CD4-positive, alpha-beta memory T cell (primary cell): ENCODE measurements at regions of chr11 and their contacts with region 1.

Region 1: DNA sequence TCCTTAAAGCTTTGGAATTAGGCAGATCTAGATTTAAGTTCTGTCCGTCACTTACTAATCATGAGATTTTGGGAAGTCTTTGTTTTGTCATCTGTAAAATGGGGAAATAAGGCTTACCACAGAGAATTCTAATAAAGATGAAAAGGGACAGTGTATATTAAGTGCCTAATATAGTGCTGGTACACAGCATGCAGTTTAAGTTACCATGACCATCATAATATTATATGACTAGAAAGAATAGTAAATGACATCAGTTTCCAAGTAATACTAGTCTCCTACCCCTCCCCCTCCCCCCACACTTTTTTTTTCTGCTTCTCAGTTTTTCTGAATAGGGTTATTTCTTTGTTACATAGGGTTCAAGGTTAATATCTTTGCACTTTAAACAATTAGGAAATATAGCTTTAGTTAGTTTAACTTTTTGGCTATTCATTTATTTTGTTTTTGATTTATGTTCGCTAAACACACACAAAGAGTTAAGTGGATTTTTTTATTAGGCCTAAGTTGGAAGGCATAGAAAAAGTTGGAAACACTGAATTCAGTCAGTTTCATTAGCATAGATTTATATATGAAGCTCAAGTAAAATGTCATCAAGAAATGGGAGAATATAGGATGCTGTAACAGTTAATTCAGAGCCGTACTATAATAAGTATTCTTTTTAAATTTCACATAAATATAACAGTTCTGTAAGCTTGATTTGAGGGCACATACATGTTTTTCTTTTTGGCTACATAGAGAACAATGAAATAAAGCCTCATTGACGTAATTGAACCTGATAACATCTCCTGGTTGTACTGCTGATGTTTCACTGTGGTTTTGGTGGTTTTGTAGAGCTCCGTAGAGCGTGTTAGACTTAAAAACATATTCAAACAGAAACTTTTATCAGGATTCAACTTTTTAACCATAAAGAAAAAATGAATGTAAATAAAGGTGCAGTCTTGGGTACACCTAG is 121.2 kb downstream of the PDE3B start:
- DNase-seq: peak; percentile 81 to 93 (median 90)
- H3K4me3 ChIP-seq: no peak overlapping the region
- H3K4me3 Mint-ChIP-seq: peak overlapping the region in 7 of 8 donors; percentile 44 to 81 (median 67)
- H3K27ac ChIP-seq: peak overlapping the region; percentile 53
- H3K27ac Mint-ChIP-seq: no peak overlapping the region
- H3K4me1 ChIP-seq: peaks cover 89% of the 10 kb centered on the region
- H3K4me1 Mint-ChIP-seq: peaks cover 18 to 40% (median 25%) of the 10 kb centered on the region in 4 donors
- H3K27me3 ChIP-seq: no peaks in the 10 kb centered on the region
- H3K27me3 Mint-ChIP-seq: no peaks in the 10 kb centered on the region

Region 2: DNA sequence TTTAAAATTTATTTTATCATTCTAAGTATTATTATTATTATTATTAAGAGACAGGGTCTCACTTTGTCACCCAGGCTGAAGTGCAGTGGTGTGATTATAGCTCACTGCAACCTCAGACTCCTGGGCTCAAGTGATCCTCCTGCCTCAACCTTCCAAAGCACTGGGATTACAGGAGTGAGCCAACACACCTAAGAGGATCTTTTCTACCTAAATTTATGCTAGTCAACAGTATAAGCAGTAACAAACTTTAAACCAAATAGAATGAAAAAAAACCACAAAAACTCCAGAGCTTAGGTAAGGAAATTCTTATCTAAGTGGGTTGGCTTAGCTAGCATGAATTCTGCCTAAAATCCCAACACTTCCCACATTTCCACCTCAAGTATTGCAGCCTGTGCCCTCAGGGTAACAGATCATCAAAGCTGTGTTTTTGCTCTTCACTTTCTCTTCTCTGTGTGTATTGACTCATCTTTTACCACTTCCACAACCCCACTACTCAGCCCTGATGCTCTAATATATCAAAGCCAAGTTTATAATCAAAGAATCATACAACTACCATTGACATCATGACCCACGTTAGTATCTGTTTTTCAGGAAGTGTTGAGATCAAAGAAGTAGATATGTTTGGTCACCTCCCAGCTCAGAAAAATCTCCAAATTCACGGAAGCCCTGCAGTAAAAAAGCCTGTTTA is 896.0 kb before region 1 on chr11:
- CTCF ChIA-PET with region 1: no interaction called
- POLR2A ChIA-PET with region 1: no interaction called
- intact Hi-C with region 1: loop called (anchors 1 kb)
- DNase-seq: peak; percentile 80 to 91 (median 84)
- H3K4me3 ChIP-seq: no peak overlapping the region
- H3K4me3 Mint-ChIP-seq: peak overlapping the region in 7 of 8 donors; percentile 1 to 56 (median 43)
- H3K27ac ChIP-seq: peak overlapping the region; percentile 55
- H3K27ac Mint-ChIP-seq: peak overlapping the region; percentile 77 to 97 (median 96)
- H3K4me1 ChIP-seq: peaks cover 32% of the 10 kb centered on the region
- H3K4me1 Mint-ChIP-seq: peaks cover 30 to 49% (median 35%) of the 10 kb centered on the region in 4 donors
- H3K27me3 ChIP-seq: no peaks in the 10 kb centered on the region
- H3K27me3 Mint-ChIP-seq: no peaks in the 10 kb centered on the region

Region 3: DNA sequence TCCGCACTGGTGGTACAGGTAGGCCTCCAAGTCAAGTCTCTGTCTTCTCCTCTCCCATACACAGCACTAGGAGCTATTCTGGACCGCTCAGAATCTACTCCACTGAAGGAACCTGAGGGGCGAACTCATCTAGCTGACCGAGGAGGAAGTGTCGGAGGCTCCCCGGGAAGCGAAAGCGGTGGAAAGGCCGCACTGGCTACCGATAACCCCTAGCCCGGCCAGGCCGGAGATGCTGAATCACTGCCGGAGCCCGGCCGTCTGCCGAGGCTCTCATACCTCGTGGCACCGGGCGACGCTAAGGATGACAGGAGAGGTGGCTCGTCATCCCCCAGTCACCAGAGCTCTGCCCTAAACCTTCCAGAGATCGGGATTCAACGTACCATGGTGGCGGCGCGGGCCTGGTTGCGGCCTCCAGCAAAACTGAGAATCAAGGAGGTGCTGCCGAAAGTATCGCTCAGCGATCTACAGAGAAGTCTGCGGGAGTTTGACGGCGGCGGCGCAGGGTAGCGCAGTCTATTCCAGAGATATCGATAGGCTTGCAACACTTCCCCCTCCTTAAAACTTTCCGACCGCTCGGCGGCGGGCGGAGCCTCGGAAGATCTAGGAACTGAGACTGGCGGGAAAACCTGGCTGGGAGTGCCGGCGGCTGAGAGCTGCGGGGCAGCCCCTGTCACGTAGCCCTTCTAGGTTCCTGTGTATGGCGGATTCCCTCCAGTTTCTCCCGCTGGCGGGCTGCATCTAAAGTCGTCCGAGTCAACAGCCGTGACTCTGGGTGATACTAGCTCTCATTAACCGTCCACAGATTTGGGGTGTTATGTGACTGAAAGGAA is 244.7 kb before region 1 on chr11 and contains the start of gene PSMA1:
- CTCF ChIA-PET with region 1: interaction called, 4 read pairs
- POLR2A ChIA-PET with region 1: interaction called, 15 read pairs
- intact Hi-C with region 1: loop called (anchors 1 kb)
- DNase-seq: peak; percentile 88 to 96 (median 91)
- H3K4me3 ChIP-seq: peak within 1 kb of the TSS; percentile 63 to 95
- H3K4me3 Mint-ChIP-seq: peak within 1 kb of the TSS; percentile 93 to 99 (median 98)
- H3K27ac ChIP-seq: peak within 1 kb of the TSS; percentile 99
- H3K27ac Mint-ChIP-seq: peak within 1 kb of the TSS; percentile 95 to 98 (median 98)
- H3K4me1 ChIP-seq: peaks cover 27% of the 10 kb centered on the region
- H3K4me1 Mint-ChIP-seq: peaks cover 17 to 41% (median 29%) of the 10 kb centered on the region in 4 donors
- H3K27me3 ChIP-seq: no peaks in the 10 kb centered on the region
- H3K27me3 Mint-ChIP-seq: no peaks in the 10 kb centered on the region
- total RNA-seq, gene PSMA1: 95.8 to 105 TPM

Region 4: GRCh38 chr11:14698771-14699170 is 66.1 kb before region 1 on chr11:
- CTCF ChIA-PET with region 1: no interaction called
- POLR2A ChIA-PET with region 1: no interaction called
- intact Hi-C with region 1: loop called (anchors 2 kb)
- DNase-seq: no peak
- H3K4me3 ChIP-seq: no peak overlapping the region
- H3K4me3 Mint-ChIP-seq: peak overlapping the region in 6 of 8 donors; percentile 2 to 73 (median 46)
- H3K27ac ChIP-seq: no peak overlapping the region
- H3K27ac Mint-ChIP-seq: peak overlapping the region in 3 of 7 donors; percentile 1 to 60 (median 24)
- H3K4me1 ChIP-seq: peaks cover 49% of the 10 kb centered on the region
- H3K4me1 Mint-ChIP-seq: peaks cover 30 to 63% (median 37%) of the 10 kb centered on the region in 4 donors
- H3K27me3 ChIP-seq: no peaks in the 10 kb centered on the region
- H3K27me3 Mint-ChIP-seq: no peaks in the 10 kb centered on the region

Region 5: GRCh38 chr11:14751975-14752407 is 12.9 kb before region 1 on chr11:
- CTCF ChIA-PET with region 1: interaction called, 3 read pairs
- POLR2A ChIA-PET with region 1: interaction called, 4 read pairs
- intact Hi-C with region 1: loop called (anchors 2 kb)
- DNase-seq: peak in 1 of 5 donors; percentile 5
- H3K4me3 ChIP-seq: no peak overlapping the region
- H3K4me3 Mint-ChIP-seq: peak overlapping the region in 6 of 8 donors; percentile 36 to 82 (median 57)
- H3K27ac ChIP-seq: no peak overlapping the region
- H3K27ac Mint-ChIP-seq: peak overlapping the region; percentile 47 to 94 (median 82)
- H3K4me1 ChIP-seq: peaks cover 52% of the 10 kb centered on the region
- H3K4me1 Mint-ChIP-seq: peaks cover 36 to 45% (median 40%) of the 10 kb centered on the region in 4 donors
- H3K27me3 ChIP-seq: no peaks in the 10 kb centered on the region
- H3K27me3 Mint-ChIP-seq: no peaks in the 10 kb centered on the region